ENCODE measurements at regions of chr9 and their contacts with region 1.

Region 1: DNA sequence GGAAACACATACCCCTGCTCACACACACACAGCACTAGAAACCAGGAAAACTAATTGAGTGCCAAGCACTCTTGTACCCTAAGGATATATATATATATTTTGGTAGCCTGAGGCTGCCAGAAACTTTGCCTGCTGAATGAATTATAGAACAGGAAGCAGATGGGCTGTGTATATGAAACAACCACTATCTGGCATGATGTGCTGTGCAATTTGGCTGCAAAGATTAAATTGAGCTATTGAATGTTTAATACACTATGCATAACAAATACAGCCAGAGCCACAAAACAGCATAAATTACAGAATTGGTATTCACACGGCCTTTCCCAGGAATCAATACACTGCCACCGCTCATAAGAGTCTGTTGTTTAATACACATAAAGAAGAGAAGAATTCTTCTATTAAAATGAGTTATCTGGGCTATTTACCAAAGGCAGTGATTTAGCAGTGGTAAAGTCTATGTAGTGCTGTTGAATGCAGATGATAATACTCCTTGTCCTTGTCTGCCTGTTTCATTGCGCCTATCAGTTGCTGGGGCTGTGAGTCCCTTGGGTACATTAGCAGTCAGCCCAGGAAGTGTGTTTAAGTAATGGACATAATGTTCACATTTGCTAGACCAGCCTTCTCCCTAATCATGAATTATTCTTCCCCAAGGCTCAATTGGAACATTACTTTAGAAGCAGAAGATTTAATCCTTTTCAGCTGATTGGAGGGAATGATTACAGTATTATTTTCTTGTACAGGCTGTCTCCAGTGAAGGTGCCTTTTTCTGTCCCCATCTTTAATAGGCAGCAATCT is 294.3 kb downstream of the TLE1 start:
- DNase-seq: no peak
- H3K4me3 ChIP-seq: peak overlapping the region in 1 of 4 donors; percentile 2
- H3K27ac ChIP-seq: peak overlapping the region; percentile 57 to 65 (median 60)
- H3K4me1 ChIP-seq: peaks cover 0 to 53% (median 46%) of the 10 kb centered on the region in 4 donors
- H3K27me3 ChIP-seq: no peaks in the 10 kb centered on the region
- CTCF ChIP-seq: no peak
- EP300 ChIP-seq: no peak
- POLR2A ChIP-seq: no peak

Region 2: GRCh38 chr9:81492710-81493447 is 97.8 kb after region 1 on chr9:
- intact Hi-C with region 1: loop called (anchors 10 kb)
- DNase-seq: no peak
- H3K4me3 ChIP-seq: no peak overlapping the region
- H3K27ac ChIP-seq: no peak overlapping the region
- H3K4me1 ChIP-seq: peaks cover 0 to under 1% (median 0%) of the 10 kb centered on the region in 4 donors
- H3K27me3 ChIP-seq: no peaks in the 10 kb centered on the region
- CTCF ChIP-seq: no peak
- EP300 ChIP-seq: no peak
- POLR2A ChIP-seq: no peak

Region 3: DNA sequence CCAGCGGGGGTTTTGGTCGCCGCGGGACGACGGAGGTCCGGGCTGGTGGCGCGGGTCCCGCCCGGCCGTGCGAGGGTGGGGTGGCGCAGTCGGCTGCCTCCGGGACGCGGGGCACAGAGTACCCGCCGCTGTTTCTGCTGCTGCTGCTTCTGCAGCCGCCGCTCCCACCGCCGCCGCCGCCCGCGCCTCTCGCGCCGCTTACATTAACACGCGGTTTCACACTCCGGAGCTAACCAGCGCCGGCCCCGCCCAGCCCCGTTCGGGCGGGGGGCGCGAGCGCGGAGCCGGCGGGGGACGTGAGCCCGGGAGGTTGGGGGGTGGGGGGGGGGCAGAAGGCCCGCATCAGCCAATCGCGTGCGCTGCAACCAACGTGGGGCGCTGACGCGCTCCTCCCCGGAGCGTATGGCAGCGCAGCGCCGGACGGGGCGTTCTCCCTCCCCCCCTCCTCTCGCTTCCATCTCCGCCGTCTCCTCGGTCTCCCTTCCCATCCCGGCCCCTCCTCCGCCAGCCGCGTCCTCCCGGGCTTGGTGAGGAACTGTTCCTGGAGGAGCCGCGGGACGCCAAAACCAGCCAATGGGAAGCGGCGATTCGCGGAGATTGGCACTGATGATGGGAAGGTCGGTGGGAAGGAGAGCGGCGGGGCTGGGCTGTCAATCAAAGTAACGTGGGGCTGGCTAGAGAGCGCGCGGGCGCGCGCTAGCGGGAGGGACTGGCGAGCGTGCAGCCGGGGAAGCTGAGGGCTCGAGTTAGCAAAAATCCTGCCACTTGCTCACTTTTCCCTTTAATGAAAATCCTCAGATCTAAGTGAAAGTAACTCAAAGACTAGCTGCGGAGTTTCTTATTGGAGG is 294.5 kb after region 1 on chr9 and contains the start of gene TLE1:
- intact Hi-C with region 1: loop called (anchors 10 kb)
- DNase-seq: peak; percentile 100
- H3K4me3 ChIP-seq: peak within 1 kb of the TSS; percentile 73 to 92 (median 91)
- H3K27ac ChIP-seq: peak within 1 kb of the TSS; percentile 92 to 97 (median 96)
- H3K4me1 ChIP-seq: peaks cover 15 to 40% (median 32%) of the 10 kb centered on the region in 4 donors
- H3K27me3 ChIP-seq: no peaks in the 10 kb centered on the region
- CTCF ChIP-seq: no peak
- EP300 ChIP-seq: peak; percentile 33
- POLR2A ChIP-seq: peak; percentile 85
- total RNA-seq, gene TLE1: 52.3 to 125 (median 76.8) TPM

Measured in esophagus muscularis mucosa (tissue), 4 donors.